ENCODE measurements at regions of chr13 and their contacts with region 1.

Region 1: DNA sequence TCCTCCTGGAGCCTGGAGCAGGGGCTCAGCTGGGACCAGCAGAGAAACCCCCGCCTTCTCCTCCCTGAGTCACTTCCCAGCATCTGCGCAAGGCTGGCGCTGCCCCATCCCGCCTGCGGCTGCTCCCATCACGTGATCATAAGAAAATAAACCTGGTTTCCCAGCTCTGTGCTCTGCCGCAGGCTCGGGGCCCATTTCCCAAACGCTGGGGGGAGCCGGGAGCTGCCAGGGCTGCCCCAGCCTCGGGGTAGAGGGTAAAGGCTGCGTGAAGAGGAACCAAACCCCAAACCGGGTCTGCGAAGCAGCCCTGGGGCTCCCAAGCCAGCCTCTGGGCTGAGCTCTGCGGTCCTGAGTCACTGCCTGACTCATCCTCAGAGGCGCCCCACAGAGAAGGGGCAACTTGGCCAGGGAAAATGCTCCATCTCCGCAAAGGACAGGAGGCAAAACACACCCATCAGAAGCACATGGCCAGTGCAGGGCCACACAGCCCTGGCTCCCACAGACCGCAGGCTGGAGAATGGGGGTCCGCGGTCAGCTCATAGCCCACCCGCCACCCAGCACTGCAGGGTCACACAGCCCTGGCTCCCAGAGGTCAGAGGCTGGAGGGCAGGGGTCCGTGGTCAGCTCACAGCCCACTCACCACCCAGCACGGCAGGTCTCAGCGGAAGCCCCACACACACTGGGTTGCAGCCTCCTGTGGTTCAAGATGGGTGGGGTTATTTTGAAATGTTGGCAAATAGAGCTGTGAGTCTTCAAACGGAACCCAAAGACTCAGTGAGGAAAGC is 67.1 kb downstream of the RASA3 start:
- DNase-seq: peak; percentile 29 to 84 (median 76)
- ATAC-seq: peak; percentile 68
- H3K4me3 ChIP-seq: peak overlapping the region; percentile 37 to 72
- H3K4me3 Mint-ChIP-seq: peak overlapping the region; percentile 84
- H3K27ac ChIP-seq: peak overlapping the region; percentile 29 to 78
- H3K27ac Mint-ChIP-seq: peak overlapping the region; percentile 96
- H3K4me1 ChIP-seq: peaks cover 63% of the 10 kb centered on the region
- H3K4me1 Mint-ChIP-seq: peaks cover 67% of the 10 kb centered on the region
- H3K27me3 ChIP-seq: no peaks in the 10 kb centered on the region
- H3K27me3 Mint-ChIP-seq: no peaks in the 10 kb centered on the region
- CTCF ChIP-seq: no peak

Region 2: DNA sequence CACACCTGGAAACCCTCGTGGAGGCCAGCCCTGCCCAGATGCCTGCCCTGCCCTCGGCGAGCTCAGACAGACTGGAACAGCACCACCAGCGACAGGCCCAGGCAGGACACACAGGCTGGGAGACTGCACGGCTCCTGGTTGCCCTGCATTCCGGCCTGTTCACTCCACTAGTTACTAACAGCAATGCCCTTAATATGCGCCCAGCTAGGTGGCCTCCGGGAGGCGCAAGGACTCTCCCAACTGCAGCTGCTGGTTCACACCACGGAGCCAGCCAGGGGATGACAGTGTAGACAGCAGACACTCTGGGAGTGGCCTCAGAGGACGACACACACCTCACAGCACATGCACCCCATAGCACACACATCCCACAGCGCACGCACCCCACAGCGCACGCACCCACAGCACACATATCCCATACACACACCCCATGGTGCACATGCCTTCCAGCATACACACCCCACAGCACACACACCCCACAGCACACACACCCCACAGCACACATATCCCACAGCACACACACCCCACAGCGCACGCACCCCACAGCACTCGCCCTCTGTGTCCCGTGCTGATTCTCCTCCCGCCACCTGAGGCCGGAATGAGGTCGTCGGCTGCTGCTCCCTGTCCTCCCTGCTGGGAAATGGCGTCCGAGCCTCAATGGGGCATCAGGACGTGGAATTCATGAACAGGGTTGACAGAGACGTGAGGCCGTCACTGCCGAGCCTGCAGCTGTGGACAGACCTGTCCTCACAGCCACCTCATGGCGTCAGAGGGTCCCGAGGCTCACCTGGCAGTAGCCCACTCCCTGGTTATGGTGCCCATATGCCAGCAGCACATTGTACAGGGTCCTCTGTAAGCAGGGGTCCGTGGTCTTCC is 715.0 kb before region 1 on chr13:
- CTCF ChIA-PET with region 1: no interaction called
- POLR2A ChIA-PET with region 1: no interaction called
- intact Hi-C with region 1: no loop called
- DNase-seq: no peak
- ATAC-seq: no peak
- H3K4me3 ChIP-seq: no peak overlapping the region
- H3K4me3 Mint-ChIP-seq: no peak overlapping the region
- H3K27ac ChIP-seq: no peak overlapping the region
- H3K27ac Mint-ChIP-seq: no peak overlapping the region
- H3K4me1 ChIP-seq: no peaks in the 10 kb centered on the region
- H3K4me1 Mint-ChIP-seq: no peaks in the 10 kb centered on the region
- H3K27me3 ChIP-seq: peaks cover 0 to 5% of the 10 kb centered on the region in 2 experiments
- H3K27me3 Mint-ChIP-seq: peaks cover 5% of the 10 kb centered on the region
- CTCF ChIP-seq: no peak

Region 3: GRCh38 chr13:114234645-114235421 is 169.5 kb after region 1 on chr13 and contains the start of gene CDC16:
- CTCF ChIA-PET with region 1: no interaction called
- POLR2A ChIA-PET with region 1: interaction called, 4 read pairs
- intact Hi-C with region 1: loop called (anchors 2 kb)
- DNase-seq: peak; percentile 57 to 93 (median 83)
- ATAC-seq: peak; percentile 84
- H3K4me3 ChIP-seq: peak within 1 kb of the TSS; percentile 76 to 80
- H3K4me3 Mint-ChIP-seq: peak within 1 kb of the TSS; percentile 88
- H3K27ac ChIP-seq: peak within 1 kb of the TSS; percentile 61 to 62
- H3K27ac Mint-ChIP-seq: peak within 1 kb of the TSS; percentile 91
- H3K4me1 ChIP-seq: peaks cover 17% of the 10 kb centered on the region
- H3K4me1 Mint-ChIP-seq: peaks cover 29% of the 10 kb centered on the region
- H3K27me3 ChIP-seq: no peaks in the 10 kb centered on the region
- H3K27me3 Mint-ChIP-seq: peaks cover 5% of the 10 kb centered on the region
- CTCF ChIP-seq: peak; percentile 37
- total RNA-seq, gene CDC16: 55.6 to 56.2 TPM